CD4-positive, alpha-beta T cell (primary cell): ENCODE measurements at regions of chr2 and their contacts with region 1.

Region 1: DNA sequence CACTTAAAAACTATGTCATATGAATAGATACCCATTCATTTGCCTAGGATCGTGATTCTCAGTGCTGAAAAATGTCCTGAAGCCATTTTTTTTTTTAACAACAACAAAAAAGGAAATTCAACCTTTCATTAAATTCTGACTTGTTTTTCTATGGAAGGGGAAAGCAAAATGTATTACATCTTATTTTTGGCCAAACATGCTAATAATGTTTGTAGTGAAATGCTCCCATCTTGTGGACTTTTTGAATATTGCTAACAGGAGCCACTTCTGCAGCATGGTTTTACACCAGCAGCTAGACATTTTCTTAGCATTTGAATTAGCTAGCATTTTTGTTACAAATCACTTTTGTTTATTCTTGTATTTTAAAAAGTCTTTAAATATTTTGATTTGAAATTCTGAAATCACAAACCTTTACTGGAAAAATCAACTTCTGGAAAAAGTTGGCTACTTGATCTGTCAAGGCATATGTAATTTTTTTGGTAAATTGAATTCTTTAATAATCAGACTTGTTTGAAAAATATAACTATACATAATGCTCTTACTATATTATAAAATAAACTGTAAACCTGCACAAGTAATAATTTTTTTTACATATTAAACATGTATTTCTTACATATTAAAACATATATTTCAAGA is 75.8 kb downstream of the KIDINS220 start:
- DNase-seq: peak in 3 of 14 experiments; percentile 22 to 29 (median 27)
- ATAC-seq: no peak
- H3K4me3 ChIP-seq: no peak overlapping the region
- H3K4me3 Mint-ChIP-seq: no peak overlapping the region
- H3K27ac ChIP-seq: no peak overlapping the region
- H3K27ac Mint-ChIP-seq: no peak overlapping the region
- H3K4me1 ChIP-seq: no peaks in the 10 kb centered on the region
- H3K4me1 Mint-ChIP-seq: peaks cover 5% of the 10 kb centered on the region
- H3K27me3 ChIP-seq: no peaks in the 10 kb centered on the region
- H3K27me3 Mint-ChIP-seq: no peaks in the 10 kb centered on the region
- CTCF ChIP-seq: peak; percentile 12

Region 2: GRCh38 chr2:7203055-7203467 is 1558.6 kb before region 1 on chr2:
- CTCF ChIA-PET with region 1: no interaction called
- POLR2A ChIA-PET with region 1: no interaction called
- intact Hi-C with region 1: loop called (anchors 1 to 10 kb)
- DNase-seq: peak; percentile 29 to 77 (median 42)
- ATAC-seq: no peak
- H3K4me3 ChIP-seq: no peak overlapping the region
- H3K4me3 Mint-ChIP-seq: no peak overlapping the region
- H3K27ac ChIP-seq: no peak overlapping the region
- H3K27ac Mint-ChIP-seq: no peak overlapping the region
- H3K4me1 ChIP-seq: no peaks in the 10 kb centered on the region
- H3K4me1 Mint-ChIP-seq: no peaks in the 10 kb centered on the region
- H3K27me3 ChIP-seq: no peaks in the 10 kb centered on the region
- H3K27me3 Mint-ChIP-seq: no peaks in the 10 kb centered on the region
- CTCF ChIP-seq: peak; percentile 94

Region 3: DNA sequence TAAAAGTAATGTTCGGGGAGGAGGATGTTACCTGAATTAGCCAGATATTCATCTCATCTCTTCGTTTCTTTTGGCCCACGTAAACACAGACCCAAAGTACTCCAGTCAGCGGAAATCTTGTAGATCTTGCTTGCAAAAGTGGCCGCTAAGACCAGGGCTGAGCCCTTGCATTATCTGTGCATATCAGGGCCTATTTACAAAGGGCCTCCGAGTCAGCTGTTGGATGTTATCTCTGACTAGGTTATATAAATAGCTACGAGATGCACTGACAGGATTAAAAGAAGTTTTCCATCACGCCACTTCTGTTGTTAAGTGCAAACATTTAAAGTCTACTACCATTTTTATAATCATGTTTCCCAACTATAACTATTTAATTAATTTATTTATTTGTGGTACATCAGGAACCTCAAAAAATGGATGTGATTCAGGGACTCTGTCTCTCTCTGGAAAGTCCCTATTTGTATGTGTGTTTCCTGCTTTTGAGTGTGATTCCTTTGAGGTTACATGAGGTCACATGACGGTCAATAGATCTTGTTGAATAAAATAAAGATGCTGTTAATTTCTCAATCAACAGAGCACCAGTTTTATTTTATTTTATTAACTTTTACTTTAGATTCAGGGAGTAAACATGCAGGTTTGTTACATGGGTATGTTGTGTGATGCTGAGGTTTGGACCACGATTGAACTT is 288.6 kb after region 1 on chr2:
- CTCF ChIA-PET with region 1: no interaction called
- POLR2A ChIA-PET with region 1: no interaction called
- intact Hi-C with region 1: no loop called
- DNase-seq: no peak
- ATAC-seq: no peak
- H3K4me3 ChIP-seq: no peak overlapping the region
- H3K4me3 Mint-ChIP-seq: no peak overlapping the region
- H3K27ac ChIP-seq: no peak overlapping the region
- H3K27ac Mint-ChIP-seq: no peak overlapping the region
- H3K4me1 ChIP-seq: no peaks in the 10 kb centered on the region
- H3K4me1 Mint-ChIP-seq: peaks cover 4% of the 10 kb centered on the region
- H3K27me3 ChIP-seq: no peaks in the 10 kb centered on the region
- H3K27me3 Mint-ChIP-seq: no peaks in the 10 kb centered on the region
- CTCF ChIP-seq: no peak